A549 (cell line): ENCODE measurements at regions of chr1 and their contacts with region 1.

Region 1: DNA sequence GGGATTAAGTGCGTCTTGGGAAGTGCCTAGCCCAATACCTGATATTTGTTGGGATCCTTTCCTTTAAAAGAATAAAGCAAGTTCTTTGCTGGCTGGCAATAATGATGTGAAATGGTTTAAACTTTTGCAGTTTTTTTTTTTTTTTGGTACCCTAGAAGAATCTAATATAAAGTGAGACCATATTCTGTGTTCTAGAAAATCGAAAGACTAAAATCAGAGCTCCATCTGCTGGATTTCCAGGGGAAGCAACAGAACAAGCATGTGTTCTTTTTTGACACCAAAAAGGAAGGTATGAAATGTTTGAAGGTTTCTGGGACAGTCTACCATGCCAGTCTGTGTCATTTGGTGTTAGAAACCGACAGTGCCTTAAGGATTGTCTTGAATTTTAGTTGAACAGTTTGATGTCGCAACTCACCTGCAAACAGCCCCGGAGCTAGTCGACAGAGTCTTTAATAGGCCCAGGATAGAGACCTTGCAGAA is 6.4 kb downstream of the UTP11 start:
- DNase-seq: no peak
- ATAC-seq: peak; percentile 39 to 69; a peak in 4 of 6 replicates
- H3K4me3 ChIP-seq: no peak overlapping the region
- H3K27ac ChIP-seq: no peak overlapping the region
- H3K4me1 ChIP-seq: peaks cover 25% of the 10 kb centered on the region
- CTCF ChIP-seq: peak; percentile 57
- EP300 ChIP-seq: no peak
- POLR2A ChIP-seq: no peak
- RAD21 ChIP-seq: peak; percentile 46 to 52; a peak in 3 of 5 replicates

Region 2: DNA sequence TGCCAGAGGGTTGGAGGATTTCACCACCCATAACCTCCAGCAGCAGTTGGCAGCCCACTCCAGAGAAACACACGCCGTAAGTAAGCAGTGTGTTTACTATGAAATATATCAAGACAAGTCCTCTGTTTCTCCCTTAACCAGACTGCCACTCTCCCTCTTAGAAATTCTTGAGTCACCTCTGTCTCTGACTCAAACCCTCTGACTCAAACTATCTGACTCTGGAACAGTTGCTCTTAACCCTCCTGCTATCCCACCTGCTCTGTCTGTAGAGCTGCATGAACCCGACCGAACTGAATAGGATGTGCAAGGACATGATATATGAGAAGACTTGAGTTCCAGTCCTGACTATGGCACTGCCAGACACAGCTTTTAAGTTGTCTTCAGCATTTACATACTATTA is 86.1 kb before region 1 on chr1:
- CTCF ChIA-PET with region 1: no interaction called
- POLR2A ChIA-PET with region 1: no interaction called
- DNase-seq: peak; percentile 28 to 37
- ATAC-seq: peak; percentile 46 to 58; a peak in 5 of 6 replicates
- H3K4me3 ChIP-seq: no peak overlapping the region
- H3K27ac ChIP-seq: no peak overlapping the region
- H3K4me1 ChIP-seq: peaks cover 18% of the 10 kb centered on the region; the same call in 2 of the 3 replicates
- CTCF ChIP-seq: no peak
- EP300 ChIP-seq: no peak
- POLR2A ChIP-seq: no peak
- RAD21 ChIP-seq: no peak

Region 3: DNA sequence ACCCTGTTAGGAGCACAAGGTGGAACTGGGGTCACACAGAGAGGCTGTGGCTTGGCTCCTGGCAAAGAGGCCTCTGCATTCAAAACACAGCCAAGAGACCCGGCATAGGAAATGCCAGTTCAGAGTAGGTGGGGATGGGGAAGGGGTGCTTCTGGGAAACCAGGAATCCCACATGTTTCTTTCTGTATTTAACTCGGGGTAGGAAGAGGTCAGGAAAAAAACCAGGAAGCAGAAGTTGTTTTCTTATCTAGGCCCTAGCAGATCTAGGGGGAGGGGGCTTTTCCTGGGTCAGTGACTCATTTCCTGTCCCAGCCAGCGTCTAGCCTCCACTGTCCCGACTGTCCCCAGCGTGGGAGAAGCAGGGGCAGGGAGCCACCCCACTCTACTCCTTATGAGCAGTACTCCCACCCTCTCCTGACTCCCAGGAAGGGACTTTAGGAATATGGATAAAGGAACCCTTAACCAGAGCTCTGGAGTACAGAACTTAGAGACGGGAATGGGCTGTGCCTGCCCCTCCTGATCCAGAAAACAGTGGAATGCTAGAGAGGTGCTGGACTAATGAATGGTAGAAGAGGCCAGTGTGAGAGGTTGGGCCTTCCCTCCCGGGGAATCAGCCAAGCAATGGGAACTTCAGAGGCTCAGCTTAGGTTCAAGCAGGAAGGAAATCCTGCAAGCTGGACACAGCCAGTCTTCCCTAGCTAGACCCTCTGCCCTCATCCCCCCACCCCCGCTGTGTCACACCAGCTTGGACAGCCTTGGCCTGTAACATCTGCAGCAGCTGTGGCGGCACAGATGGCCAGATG is 19.3 kb before region 1 on chr1:
- CTCF ChIA-PET with region 1: interaction called, 12 read pairs
- POLR2A ChIA-PET with region 1: interaction called, 3 read pairs
- DNase-seq: peak in 1 of 2 experiments; percentile 60
- ATAC-seq: peak; percentile 15 to 58; a peak in 3 of 6 replicates
- H3K4me3 ChIP-seq: no peak overlapping the region
- H3K27ac ChIP-seq: peak overlapping the region; percentile 74 to 87
- H3K4me1 ChIP-seq: peaks cover 43% of the 10 kb centered on the region
- CTCF ChIP-seq: no peak
- EP300 ChIP-seq: no peak
- POLR2A ChIP-seq: no peak
- RAD21 ChIP-seq: no peak

Region 4: GRCh38 chr1:38173157-38173831 is 154.4 kb after region 1 on chr1:
- CTCF ChIA-PET with region 1: no interaction called
- POLR2A ChIA-PET with region 1: no interaction called
- DNase-seq: no peak
- ATAC-seq: no peak
- H3K4me3 ChIP-seq: no peak overlapping the region
- H3K27ac ChIP-seq: no peak overlapping the region
- H3K4me1 ChIP-seq: no peaks in the 10 kb centered on the region
- CTCF ChIP-seq: no peak
- EP300 ChIP-seq: no peak
- POLR2A ChIP-seq: no peak
- RAD21 ChIP-seq: no peak